ENCODE measurements at regions of chr1 and their contacts with region 1.

Region 1: DNA sequence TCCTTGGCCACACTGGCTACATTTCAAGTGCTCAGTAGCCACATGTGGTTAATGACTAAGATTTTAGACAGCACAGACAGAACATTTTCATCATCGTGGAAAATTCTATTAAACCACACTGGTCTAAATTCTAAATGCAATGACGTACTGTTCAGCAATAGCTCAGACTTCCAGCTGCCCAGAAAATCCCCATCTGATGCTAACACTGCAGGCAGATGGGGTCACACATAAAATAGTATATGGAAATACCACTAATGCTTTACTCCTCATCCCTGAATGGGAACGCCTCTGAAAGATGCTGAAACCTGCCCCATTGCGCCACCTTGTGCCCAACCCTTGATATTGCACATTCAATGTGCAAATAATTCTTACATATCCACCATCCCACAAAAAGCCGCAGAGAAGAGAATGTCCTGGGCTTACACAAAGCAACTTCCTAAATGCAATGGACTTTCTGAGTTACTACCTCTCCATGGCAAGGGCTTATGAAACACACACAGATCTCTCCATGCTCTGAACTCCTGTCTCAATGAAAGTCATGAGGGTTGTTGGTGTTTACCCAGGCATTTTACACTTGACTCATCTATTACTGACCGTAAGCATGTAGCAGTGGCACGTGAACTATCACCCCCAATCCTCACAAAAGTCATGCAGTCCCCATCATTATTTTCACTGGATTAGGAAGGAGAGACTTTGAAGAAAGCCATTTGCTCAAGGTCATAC is 20.3 kb upstream of the SLC5A9 start:
- DNase-seq: peak in 8 of 9 donors; percentile 16 to 55 (median 45)
- ATAC-seq: peak; percentile 72
- H3K4me3 ChIP-seq: no peak overlapping the region
- H3K4me3 Mint-ChIP-seq: no peak overlapping the region
- H3K27ac ChIP-seq: no peak overlapping the region
- H3K27ac Mint-ChIP-seq: no peak overlapping the region
- H3K4me1 ChIP-seq: no peaks in the 10 kb centered on the region
- H3K4me1 Mint-ChIP-seq: no peaks in the 10 kb centered on the region
- H3K27me3 ChIP-seq: no peaks in the 10 kb centered on the region
- H3K27me3 Mint-ChIP-seq: peaks cover 0 to 5% (median 0%) of the 10 kb centered on the region in 5 donors

Region 2: DNA sequence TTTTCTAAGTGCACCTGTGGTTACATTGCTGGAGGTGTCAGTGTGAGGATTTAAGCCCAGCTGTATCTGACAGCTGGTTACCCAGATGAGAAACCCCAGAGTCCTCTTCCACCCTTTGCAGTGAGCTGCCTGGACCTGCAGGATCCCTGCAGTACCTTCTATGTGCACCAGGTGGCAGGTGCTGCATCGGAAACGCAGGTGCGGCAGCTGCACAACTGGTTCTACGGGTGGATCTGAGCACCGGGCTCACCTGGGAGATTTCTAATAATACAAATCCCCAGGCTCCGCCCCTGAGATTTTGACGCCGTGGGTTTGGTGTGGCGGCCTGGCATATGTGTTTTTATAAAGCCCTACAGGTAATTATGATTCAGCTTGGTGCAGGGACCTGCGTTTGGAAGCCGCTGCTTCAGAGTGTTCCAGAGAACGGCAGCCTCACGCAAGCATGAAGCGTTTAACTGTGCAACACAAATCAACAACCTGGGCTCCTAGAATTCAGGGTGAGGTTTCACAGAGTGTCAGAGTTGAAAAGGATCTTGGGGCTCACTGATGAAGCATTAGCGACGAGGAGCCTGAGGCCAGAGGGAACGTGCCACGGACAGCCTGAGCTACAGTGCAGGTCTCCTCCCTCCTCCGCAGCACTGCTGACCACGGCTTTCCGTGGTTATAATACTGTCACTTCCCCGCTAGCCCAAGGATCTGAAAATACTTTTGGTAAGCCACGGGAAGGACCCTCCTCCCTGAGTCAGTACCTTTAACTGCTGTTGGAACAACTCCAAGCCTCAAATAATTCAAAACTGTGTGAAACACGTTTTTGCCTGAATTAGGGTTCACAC is 108.3 kb before region 1 on chr1:
- CTCF ChIA-PET with region 1: interaction called, 5 read pairs
- POLR2A ChIA-PET with region 1: no interaction called
- intact Hi-C with region 1: loop called (anchors 1 to 5 kb)
- DNase-seq: peak; percentile 43 to 78 (median 70)
- ATAC-seq: peak; percentile 81
- H3K4me3 ChIP-seq: peak overlapping the region; percentile 15
- H3K4me3 Mint-ChIP-seq: peak overlapping the region; percentile 1 to 83 (median 76)
- H3K27ac ChIP-seq: no peak overlapping the region
- H3K27ac Mint-ChIP-seq: peak overlapping the region in 1 of 9 donors; percentile 5
- H3K4me1 ChIP-seq: no peaks in the 10 kb centered on the region
- H3K4me1 Mint-ChIP-seq: peaks cover 4 to 9% (median 7%) of the 10 kb centered on the region in 7 donors
- H3K27me3 ChIP-seq: no peaks in the 10 kb centered on the region
- H3K27me3 Mint-ChIP-seq: peaks cover 31 to 70% (median 65%) of the 10 kb centered on the region in 5 donors

Region 3: GRCh38 chr1:48109390-48110013 is 92.7 kb before region 1 on chr1:
- CTCF ChIA-PET with region 1: interaction called, 3 read pairs
- POLR2A ChIA-PET with region 1: no interaction called
- intact Hi-C with region 1: loop called (anchors 1 kb)
- DNase-seq: peak in 5 of 9 donors; percentile 5 to 29 (median 17)
- ATAC-seq: no peak
- H3K4me3 ChIP-seq: no peak overlapping the region
- H3K4me3 Mint-ChIP-seq: no peak overlapping the region
- H3K27ac ChIP-seq: no peak overlapping the region
- H3K27ac Mint-ChIP-seq: no peak overlapping the region
- H3K4me1 ChIP-seq: no peaks in the 10 kb centered on the region
- H3K4me1 Mint-ChIP-seq: peaks cover 0 to 2% (median 0%) of the 10 kb centered on the region in 7 donors
- H3K27me3 ChIP-seq: no peaks in the 10 kb centered on the region
- H3K27me3 Mint-ChIP-seq: peaks cover 10 to 19% (median 11%) of the 10 kb centered on the region in 5 donors

Region 4: DNA sequence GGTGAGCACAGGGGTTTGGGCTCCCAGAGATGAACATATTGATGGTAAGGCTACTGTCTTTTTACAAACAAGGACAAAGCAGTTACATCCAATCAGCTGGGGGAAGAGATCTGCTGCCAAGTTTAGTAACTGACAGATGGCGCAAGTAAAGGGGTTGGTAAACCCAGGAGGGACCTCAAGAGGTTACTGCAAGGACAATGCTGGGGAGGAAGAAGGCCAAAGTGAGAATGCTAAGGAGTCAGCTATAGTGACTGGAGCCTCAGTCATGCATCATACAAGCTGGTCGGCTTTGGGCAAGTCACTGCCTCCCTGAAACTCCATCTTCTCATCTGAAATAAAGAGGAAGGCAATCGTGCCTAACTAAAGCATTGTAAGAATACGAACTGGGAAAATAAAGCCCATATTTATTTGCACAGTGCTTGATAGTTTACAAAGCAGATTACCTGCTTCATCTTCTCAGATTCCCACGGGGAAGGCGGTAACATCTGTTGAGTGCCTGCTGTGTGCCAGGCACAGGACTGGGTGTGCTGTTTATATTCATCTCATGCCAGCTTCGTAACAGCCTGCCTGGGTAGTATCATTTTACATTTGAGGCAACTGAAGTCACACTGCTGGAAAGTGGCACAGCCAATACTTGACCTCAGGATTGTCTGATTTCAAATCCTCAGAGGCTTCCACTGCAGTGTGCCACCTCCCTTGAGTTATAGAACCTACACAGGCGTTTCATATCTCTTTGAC is 459.7 kb after region 1 on chr1:
- CTCF ChIA-PET with region 1: no interaction called
- POLR2A ChIA-PET with region 1: no interaction called
- intact Hi-C with region 1: no loop called
- DNase-seq: no peak
- ATAC-seq: peak; percentile 58
- H3K4me3 ChIP-seq: no peak overlapping the region
- H3K4me3 Mint-ChIP-seq: no peak overlapping the region
- H3K27ac ChIP-seq: no peak overlapping the region
- H3K27ac Mint-ChIP-seq: no peak overlapping the region
- H3K4me1 ChIP-seq: no peaks in the 10 kb centered on the region
- H3K4me1 Mint-ChIP-seq: peaks cover 0 to 2% (median 0%) of the 10 kb centered on the region in 7 donors
- H3K27me3 ChIP-seq: no peaks in the 10 kb centered on the region
- H3K27me3 Mint-ChIP-seq: peaks cover 0 to 16% (median 13%) of the 10 kb centered on the region in 5 donors